CD14-positive monocyte (primary cell): ENCODE measurements at regions of chr16 and their contacts with region 1.

Region 1: DNA sequence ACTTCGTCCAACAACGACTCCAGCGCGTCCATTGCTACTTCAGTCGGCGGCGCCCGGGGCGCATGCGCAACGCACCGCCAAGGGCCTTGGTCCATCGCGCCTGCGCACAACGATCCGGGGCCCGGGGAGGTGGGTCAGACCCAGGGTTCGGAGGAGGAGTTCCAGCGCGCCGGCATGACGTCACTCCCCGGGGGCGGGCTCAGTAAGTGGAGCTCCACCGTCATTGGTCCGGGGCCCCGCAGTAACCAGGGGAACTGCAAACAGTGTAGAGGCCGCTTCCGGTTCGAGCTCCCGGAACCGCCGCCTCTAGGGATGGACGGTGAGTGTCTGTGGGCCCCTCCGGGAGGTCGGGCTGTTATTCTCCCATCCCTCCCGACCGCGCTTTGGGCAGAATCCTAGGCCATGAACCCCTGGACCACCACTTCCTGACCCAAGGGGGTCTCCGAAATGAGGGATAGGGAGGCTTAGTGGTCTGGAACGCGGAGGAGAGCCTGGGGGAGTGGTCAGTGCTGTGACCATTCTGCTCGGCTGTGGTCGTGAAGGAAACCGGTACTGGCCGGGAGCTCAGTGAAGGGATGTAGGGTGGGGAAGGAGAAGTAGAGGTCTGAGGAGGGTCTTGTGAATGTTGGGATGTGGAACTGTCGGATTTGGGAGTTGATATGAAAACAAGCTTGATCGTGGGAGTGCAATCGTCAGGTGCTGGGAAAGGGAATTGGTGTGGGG is at the starts of genes GTF3C1 and KATNIP:
- DNase-seq: peak; percentile 99
- H3K4me3 ChIP-seq: peak within 1 kb of the TSS; percentile 94 to 97 (median 95)
- H3K4me3 Mint-ChIP-seq: peak within 1 kb of the TSS; percentile 94 to 95
- H3K27ac ChIP-seq: peak within 1 kb of the TSS; percentile 75 to 96
- H3K27ac Mint-ChIP-seq: peak within 1 kb of the TSS; percentile 94 to 99 (median 98)
- H3K4me1 ChIP-seq: peaks cover 19 to 21% of the 10 kb centered on the region in 2 donors
- H3K4me1 Mint-ChIP-seq: peaks cover 31% of the 10 kb centered on the region
- H3K27me3 ChIP-seq: no peaks in the 10 kb centered on the region
- H3K27me3 Mint-ChIP-seq: no peaks in the 10 kb centered on the region
- CTCF ChIP-seq: no peak
- polyA plus RNA-seq, gene GTF3C1: 7.0 to 22.0 (median 12.8) TPM
- polyA plus RNA-seq, gene KATNIP: 2.4 to 28.0 (median 5.0) TPM

Region 2: GRCh38 chr16:27203429-27204231 is 346.4 kb before region 1 on chr16 and contains the start of gene KDM8:
- intact Hi-C with region 1: loop called in 1 of 2 experiments (anchors 10 kb)
- DNase-seq: peak; percentile 100
- H3K4me3 ChIP-seq: peak within 1 kb of the TSS; percentile 57 to 79 (median 65)
- H3K4me3 Mint-ChIP-seq: peak within 1 kb of the TSS; percentile 90 to 98
- H3K27ac ChIP-seq: peak within 1 kb of the TSS; percentile 95 to 96
- H3K27ac Mint-ChIP-seq: peak within 1 kb of the TSS; percentile 99 to 100 (median 99)
- H3K4me1 ChIP-seq: peaks cover 30 to 34% of the 10 kb centered on the region in 2 donors
- H3K4me1 Mint-ChIP-seq: peaks cover 35% of the 10 kb centered on the region
- H3K27me3 ChIP-seq: no peaks in the 10 kb centered on the region
- H3K27me3 Mint-ChIP-seq: peaks cover 0 to 2% (median 0%) of the 10 kb centered on the region in 3 donors
- CTCF ChIP-seq: no peak
- polyA plus RNA-seq, gene KDM8: 0.40 to 3.3 (median 1.5) TPM

Region 3: DNA sequence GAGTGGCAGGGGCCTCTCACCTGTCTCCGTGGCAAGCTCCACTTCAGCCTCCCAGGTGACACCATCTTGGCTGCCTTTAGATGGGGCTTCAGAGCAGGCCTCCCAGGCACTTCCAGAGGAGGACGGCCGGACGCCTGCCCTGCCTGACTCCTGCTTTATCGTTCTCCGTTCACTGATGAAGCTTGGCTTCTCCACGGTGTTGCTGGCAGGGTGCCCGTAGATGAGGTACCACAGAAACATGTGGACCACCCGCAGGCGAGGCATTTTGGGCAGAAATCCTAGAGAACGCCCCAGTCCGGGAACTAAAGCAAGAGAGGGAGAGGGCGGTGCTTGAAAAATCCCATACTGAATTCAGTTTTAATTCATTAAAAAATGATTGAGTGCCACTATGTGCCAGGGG is 54.8 kb before region 1 on chr16:
- intact Hi-C with region 1: no loop called
- DNase-seq: no peak
- H3K4me3 ChIP-seq: no peak overlapping the region
- H3K4me3 Mint-ChIP-seq: no peak overlapping the region
- H3K27ac ChIP-seq: no peak overlapping the region
- H3K27ac Mint-ChIP-seq: peak overlapping the region in 1 of 7 donors; percentile 16
- H3K4me1 ChIP-seq: no peaks in the 10 kb centered on the region
- H3K4me1 Mint-ChIP-seq: no peaks in the 10 kb centered on the region
- H3K27me3 ChIP-seq: no peaks in the 10 kb centered on the region
- H3K27me3 Mint-ChIP-seq: peaks cover 0 to 2% (median 0%) of the 10 kb centered on the region in 3 donors
- CTCF ChIP-seq: no peak